Activated CD4-positive, alpha-beta memory T cell treated with anti-CD3 and anti-CD28 coated beads for 36 hours (primary cell): ENCODE measurements at regions of chr19 and their contacts with region 1.

Region 1: DNA sequence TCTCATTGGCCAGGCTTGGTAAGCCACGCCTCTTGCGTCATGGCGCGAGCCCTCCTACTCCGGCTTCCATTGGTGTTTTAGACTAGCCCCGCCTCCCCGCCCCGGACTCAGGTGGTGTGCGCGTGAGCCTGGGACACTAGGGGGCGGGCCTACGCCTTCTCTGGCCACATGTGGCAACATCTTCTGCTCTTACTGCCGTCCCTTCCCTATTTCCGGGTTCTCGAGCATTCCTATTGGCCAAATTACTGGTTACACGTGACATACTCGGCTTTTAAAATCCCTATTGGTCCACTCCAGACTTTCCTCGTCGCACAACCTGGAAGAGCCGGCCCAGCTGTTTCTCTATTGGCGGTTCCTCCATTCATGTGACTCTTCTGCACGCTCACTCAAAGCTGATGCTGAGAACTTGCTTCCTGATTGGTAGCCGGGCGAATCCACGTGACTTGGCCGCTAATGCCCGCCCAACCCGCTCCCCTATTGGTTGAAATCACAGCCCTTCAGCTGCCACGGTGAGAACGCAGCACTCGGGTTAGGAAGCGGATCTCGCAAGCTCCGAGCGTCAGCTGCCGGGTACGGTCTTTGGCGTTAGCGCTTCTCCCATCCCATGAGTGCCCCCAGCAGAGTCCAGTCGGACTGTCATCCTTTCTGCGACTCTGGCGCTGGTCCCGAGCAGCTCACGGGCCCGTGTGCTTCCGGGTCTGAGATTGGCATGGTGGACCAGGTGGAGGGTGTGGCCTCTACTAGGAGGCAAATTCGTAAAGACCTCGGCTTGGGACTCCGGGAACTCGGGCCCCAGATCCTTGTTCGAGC is at the start of gene BLOC1S3:
- DNase-seq: peak; percentile 100
- H3K4me3 Mint-ChIP-seq: peak within 1 kb of the TSS; percentile 94
- H3K27ac Mint-ChIP-seq: peak within 1 kb of the TSS; percentile 92
- H3K4me1 Mint-ChIP-seq: peaks cover 40% of the 10 kb centered on the region
- H3K27me3 Mint-ChIP-seq: no peaks in the 10 kb centered on the region
- total RNA-seq, gene BLOC1S3: 10.4 to 11.8 TPM

Region 2: DNA sequence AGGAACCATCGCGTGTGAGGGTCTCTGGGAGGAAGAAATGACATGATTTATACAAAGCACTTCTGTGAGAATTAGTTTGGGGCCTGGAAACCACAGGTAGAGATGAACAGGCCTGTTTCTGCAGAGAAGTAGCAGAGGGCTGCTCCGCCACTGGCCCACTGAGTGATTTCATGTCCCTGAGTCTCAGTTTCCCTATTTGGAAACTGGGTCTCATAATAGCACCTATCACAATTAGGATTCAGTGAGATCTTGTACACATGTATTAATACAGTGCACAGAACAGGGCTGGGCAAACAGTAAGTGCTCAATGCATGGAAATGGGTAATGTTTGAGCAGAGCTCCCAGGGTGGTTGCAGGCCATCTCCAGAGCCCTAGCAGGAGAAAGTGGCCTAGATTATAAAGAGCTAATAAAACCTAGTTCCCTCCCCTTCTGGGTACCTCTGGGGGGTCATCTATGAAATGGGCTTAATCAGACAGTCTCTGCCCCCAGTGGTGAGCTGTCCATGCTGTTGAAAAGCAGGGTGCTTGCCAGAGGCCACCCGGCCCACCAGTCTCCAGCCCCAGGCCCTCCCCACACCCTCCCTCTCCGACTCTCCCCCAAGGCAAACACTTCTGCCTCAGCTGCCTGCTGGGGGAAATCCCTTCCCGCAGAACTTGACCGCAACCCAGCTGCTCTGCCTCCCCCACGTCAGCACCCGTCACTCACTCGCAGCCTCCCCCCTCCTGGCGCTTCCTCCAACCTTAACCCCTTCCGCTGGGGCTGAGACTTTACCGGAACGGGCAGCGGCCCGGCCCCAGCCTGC is 425.4 kb before region 1 on chr19:
- CTCF ChIA-PET with region 1: no interaction called
- POLR2A ChIA-PET with region 1: no interaction called
- intact Hi-C with region 1: loop called (anchors 5 kb)
- DNase-seq: peak; percentile 99
- H3K4me3 Mint-ChIP-seq: peak overlapping the region; percentile 93
- H3K27ac Mint-ChIP-seq: peak overlapping the region; percentile 99
- H3K4me1 Mint-ChIP-seq: peaks cover 52% of the 10 kb centered on the region
- H3K27me3 Mint-ChIP-seq: no peaks in the 10 kb centered on the region

Region 3: DNA sequence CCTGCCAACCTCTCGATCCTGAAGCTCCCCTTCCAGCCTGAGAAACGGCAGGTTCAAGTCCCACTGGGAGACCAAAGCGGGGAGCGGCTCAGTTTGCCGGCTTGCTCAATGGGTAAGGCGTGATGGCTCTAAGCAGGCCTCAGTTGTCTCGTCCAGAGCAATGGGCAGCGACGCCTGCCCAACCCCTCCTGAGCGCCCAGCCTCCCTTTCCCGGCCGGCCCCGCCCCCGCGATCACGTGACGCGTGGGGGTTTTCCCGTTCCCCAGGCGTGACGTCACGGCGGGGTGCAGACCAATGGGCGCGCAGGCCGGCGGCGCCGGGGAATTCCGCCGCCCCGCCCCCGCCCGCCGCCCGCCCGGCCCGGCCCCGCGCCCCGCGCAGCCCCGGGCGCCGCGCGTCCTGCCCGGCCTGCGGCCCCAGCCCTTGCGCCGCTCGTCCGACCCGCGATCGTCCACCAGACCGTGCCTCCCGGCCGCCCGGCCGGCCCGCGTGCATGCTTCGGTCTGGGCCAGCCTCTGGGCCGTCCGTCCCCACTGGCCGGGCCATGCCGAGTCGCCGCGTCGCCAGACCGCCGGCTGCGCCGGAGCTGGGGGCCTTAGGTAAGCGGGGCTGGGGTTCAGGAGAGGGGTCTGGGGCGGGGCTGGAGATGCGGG is 177.3 kb before region 1 on chr19 and contains the start of gene RELB:
- CTCF ChIA-PET with region 1: no interaction called
- POLR2A ChIA-PET with region 1: interaction called, 3 read pairs
- intact Hi-C with region 1: loop called (anchors 1 kb)
- DNase-seq: peak; percentile 97
- H3K4me3 Mint-ChIP-seq: peak within 1 kb of the TSS; percentile 96
- H3K27ac Mint-ChIP-seq: peak within 1 kb of the TSS; percentile 99
- H3K4me1 Mint-ChIP-seq: peaks cover 22% of the 10 kb centered on the region
- H3K27me3 Mint-ChIP-seq: no peaks in the 10 kb centered on the region
- total RNA-seq, gene RELB: 62.4 to 63.1 TPM

Region 4: GRCh38 chr19:45079063-45079910 is 99.2 kb before region 1 on chr19 and contains the start of gene GEMIN7:
- CTCF ChIA-PET with region 1: no interaction called
- POLR2A ChIA-PET with region 1: interaction called, 4 read pairs
- intact Hi-C with region 1: loop called (anchors 5 kb)
- DNase-seq: peak; percentile 88
- H3K4me3 Mint-ChIP-seq: peak within 1 kb of the TSS; percentile 96
- H3K27ac Mint-ChIP-seq: peak within 1 kb of the TSS; percentile 76
- H3K4me1 Mint-ChIP-seq: peaks cover 42% of the 10 kb centered on the region
- H3K27me3 Mint-ChIP-seq: no peaks in the 10 kb centered on the region
- total RNA-seq, gene GEMIN7: 29.8 to 30.1 TPM

Region 5: DNA sequence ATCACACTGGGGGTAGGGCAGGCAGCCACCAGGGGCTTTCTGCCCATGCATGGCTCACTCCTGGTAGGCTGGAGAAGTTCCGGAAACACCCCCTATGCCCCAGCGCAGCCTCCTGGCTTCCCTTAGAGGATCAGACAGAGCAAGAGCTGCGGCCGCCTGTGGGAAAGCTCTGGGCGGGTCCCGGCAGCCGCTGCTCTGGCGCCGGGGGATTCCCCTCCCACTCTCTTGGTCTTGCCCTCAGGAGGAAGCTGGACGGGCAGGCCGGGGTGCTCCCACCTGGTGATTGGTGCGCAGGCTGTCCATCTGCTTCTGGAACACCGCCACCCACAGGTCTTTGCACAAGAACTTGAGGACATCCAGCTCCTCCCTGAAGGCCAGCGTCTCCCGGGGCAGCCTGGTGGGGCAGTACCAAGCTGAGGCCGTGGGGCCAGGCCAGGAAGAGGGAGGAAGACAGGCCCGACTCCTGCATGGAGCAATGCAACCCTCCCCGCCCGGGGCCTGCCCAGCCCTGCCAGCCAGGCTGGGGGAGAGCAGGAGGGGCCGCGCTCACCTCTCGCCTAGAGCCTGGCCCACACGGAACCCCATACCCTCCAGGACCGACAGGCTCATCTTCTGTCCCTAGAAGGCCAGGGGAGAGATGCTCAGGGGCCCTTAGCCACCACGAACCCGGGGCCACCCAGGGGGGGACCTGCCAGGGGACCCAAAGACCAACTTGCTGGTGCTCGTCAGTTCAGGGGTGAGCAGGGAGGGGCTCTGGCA is 13.7 kb before region 1 on chr19:
- CTCF ChIA-PET with region 1: interaction called, 8 read pairs
- POLR2A ChIA-PET with region 1: interaction called, 15 read pairs
- intact Hi-C with region 1: no loop called
- DNase-seq: peak; percentile 86
- H3K4me3 Mint-ChIP-seq: no peak overlapping the region
- H3K27ac Mint-ChIP-seq: no peak overlapping the region
- H3K4me1 Mint-ChIP-seq: peaks cover 21% of the 10 kb centered on the region
- H3K27me3 Mint-ChIP-seq: no peaks in the 10 kb centered on the region

Region 6: DNA sequence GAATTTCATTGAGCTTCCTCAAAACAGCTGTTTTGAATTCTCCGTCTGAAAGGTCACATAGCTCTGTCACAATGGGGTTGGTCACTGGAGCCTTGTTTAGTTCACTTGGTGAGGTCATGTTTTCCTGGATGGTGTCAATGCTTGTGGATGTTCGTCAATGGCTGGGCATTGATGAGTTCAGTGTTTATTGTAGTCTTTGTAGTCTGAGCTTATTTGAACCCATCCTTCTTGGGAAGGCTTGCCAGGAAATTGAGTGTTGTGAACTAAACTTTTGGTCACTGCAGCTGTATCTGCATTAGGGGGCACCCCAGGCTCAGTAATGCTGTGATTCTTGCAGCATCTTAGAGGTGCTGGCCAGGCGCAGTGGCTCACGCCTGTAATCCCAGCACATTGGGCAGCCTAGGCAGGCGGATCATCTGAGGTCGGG is 22.1 kb after region 1 on chr19:
- CTCF ChIA-PET with region 1: no interaction called
- POLR2A ChIA-PET with region 1: no interaction called
- intact Hi-C with region 1: no loop called
- DNase-seq: no peak
- H3K4me3 Mint-ChIP-seq: no peak overlapping the region
- H3K27ac Mint-ChIP-seq: no peak overlapping the region
- H3K4me1 Mint-ChIP-seq: no peaks in the 10 kb centered on the region
- H3K27me3 Mint-ChIP-seq: no peaks in the 10 kb centered on the region

Region 7: GRCh38 chr19:45496349-45496953 is 318.0 kb after region 1 on chr19:
- CTCF ChIA-PET with region 1: no interaction called
- POLR2A ChIA-PET with region 1: no interaction called
- intact Hi-C with region 1: loop called (anchors 10 kb)
- DNase-seq: peak; percentile 60
- H3K4me3 Mint-ChIP-seq: peak overlapping the region; percentile 50
- H3K27ac Mint-ChIP-seq: no peak overlapping the region
- H3K4me1 Mint-ChIP-seq: peaks cover 33% of the 10 kb centered on the region
- H3K27me3 Mint-ChIP-seq: peaks cover 25% of the 10 kb centered on the region